Dendritic cell treated with granulocyte-macrophage colony-stimulating factor and Interleukin-4, amounts not matched to agents 40 ng/mL and 50 ng/mL, for 4 days (primary cell): ENCODE measurements at regions of chr12 and their contacts with region 1.

Region 1: GRCh38 chr12:44510510-44510909 is 365.6 kb downstream of the NELL2 start:
- H3K4me3 Mint-ChIP-seq: no peak overlapping the region
- H3K27ac Mint-ChIP-seq: no peak overlapping the region
- H3K4me1 Mint-ChIP-seq: no peaks in the 10 kb centered on the region
- H3K27me3 Mint-ChIP-seq: no peaks in the 10 kb centered on the region

Region 2: DNA sequence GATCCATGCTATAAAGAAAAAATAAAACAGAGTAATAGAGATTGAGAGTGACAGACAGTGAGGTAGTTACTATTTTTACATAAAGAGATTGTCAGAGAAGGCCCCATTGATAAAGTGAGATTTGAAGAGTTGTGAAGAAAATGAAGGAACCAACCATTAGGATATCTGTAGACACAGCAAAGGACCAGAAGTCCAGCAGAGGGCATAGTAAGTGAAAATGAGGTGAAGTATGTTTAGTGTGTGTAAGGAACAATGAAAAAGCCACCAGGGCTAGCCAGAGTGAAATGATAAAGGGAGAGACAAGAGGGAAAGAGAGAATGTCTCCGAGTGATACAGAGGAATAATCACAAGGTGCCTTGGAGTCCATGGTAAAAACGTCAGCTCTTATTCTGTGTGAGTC is 45.4 kb before region 1 on chr12:
- intact Hi-C with region 1: no loop called
- H3K4me3 Mint-ChIP-seq: no peak overlapping the region
- H3K27ac Mint-ChIP-seq: no peak overlapping the region
- H3K4me1 Mint-ChIP-seq: no peaks in the 10 kb centered on the region
- H3K27me3 Mint-ChIP-seq: no peaks in the 10 kb centered on the region

Region 3: GRCh38 chr12:44584625-44585024 is 74.1 kb after region 1 on chr12:
- intact Hi-C with region 1: loop called (anchors 5 kb)
- H3K4me3 Mint-ChIP-seq: no peak overlapping the region
- H3K27ac Mint-ChIP-seq: no peak overlapping the region
- H3K4me1 Mint-ChIP-seq: no peaks in the 10 kb centered on the region
- H3K27me3 Mint-ChIP-seq: no peaks in the 10 kb centered on the region